ENCODE measurements at regions of chr12 and their contacts with region 1.

Region 1: DNA sequence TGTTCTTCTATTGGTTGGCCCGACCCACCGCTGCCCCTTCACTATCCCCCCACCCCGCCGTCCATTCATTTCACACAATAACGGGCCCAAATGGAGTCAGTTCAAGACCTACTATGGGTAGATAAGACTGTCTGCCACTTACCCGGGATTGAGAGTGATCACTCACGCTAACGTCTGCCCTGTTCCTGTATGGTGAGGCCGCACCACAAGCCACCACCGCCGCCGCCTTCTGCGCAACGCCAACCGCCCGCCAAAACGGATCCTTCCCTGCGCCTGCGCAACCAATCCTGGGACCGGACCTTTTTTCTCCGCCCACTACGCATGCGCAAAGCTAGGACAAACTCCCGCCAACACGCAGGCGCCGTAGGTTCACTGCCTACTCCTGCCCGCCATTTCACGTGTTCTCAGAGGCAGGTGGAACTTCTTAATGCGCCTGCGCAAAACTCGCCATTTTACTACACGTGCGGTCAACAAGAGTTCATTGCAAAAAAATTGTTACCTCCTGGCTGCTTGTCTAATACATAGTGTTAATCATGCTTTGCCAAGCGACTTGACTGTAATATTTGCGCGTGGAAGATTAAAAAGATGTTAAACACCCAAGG is at the start of gene CBX5:
- DNase-seq: peak; percentile 99
- H3K4me3 Mint-ChIP-seq: no peak within 1 kb of the TSS
- H3K27ac Mint-ChIP-seq: no peak within 1 kb of the TSS
- H3K4me1 Mint-ChIP-seq: peaks cover 23% of the 10 kb centered on the region
- H3K27me3 Mint-ChIP-seq: no peaks in the 10 kb centered on the region
- CTCF ChIP-seq: no peak
- total RNA-seq, gene CBX5: 109 and 112 TPM in 2 replicates

Region 2: DNA sequence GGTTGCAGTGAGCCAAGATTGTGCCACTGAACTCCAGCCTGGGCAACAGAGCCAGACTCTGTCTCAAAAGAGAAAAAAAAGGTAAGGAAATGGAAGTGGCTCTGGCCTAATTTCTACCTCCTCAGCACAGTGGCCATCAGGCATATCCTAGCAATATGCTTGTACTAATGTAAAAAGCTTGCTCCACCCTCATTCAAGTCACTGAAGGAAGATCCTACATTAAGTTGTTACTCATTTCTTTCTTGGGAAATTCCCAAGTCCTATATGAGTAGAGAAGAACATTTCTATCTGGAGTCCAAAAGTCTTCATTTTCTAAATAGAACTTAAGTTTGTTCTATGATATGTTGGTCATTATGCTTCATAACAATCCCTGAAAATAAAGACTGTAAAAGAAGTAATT is 408.6 kb before region 1 on chr12:
- CTCF ChIA-PET with region 1: no interaction called
- POLR2A ChIA-PET with region 1: no interaction called
- intact Hi-C with region 1: no loop called
- DNase-seq: no peak
- H3K4me3 Mint-ChIP-seq: no peak overlapping the region
- H3K27ac Mint-ChIP-seq: no peak overlapping the region
- H3K4me1 Mint-ChIP-seq: peaks cover 32% of the 10 kb centered on the region
- H3K27me3 Mint-ChIP-seq: no peaks in the 10 kb centered on the region
- CTCF ChIP-seq: no peak

Region 3: DNA sequence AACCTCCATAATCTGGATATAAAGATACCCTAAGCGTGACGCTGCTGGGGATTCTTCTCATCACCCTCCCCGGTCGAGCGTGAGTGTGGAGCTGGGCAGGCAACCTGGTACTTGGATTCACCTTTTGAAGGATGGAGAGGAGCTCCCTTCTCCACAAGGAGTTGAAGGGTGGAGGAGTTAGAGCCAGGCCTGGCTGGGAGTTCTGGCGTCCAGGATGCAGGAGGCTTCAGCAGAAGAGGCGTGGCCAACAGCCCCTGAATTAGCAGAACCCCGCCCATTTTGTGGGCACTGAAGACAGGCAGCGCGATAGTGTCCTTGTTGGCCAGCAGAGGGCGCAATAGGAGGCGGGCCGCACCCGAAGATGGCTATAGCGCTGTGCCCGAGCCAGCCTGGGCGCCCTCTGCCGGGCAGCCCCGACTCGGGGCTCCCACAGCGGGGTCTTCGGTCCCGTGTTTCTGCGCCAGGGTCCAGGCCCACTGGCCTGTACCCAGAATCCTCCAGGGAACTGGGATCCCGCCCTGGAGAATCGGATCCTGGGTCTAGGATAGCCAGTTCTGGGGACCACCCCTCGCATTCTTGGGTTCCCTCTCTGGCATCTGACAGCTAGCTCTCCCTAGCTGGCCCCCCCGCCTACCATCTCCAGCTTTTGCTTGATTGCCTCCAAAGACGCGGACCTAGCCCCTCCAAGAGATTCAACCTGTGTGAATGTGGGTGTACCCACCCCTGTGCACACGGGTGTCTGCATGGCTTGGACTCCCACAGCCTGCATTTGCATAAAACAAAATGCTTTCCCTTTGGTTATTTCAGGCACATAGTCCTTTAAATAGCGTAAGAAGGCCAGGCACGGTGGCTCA is 65.2 kb before region 1 on chr12:
- CTCF ChIA-PET with region 1: interaction called, 4 read pairs
- POLR2A ChIA-PET with region 1: interaction called, 12 read pairs
- intact Hi-C with region 1: no loop called
- DNase-seq: peak; percentile 93
- H3K4me3 Mint-ChIP-seq: peak overlapping the region; percentile 26
- H3K27ac Mint-ChIP-seq: no peak overlapping the region
- H3K4me1 Mint-ChIP-seq: peaks cover 12% of the 10 kb centered on the region
- H3K27me3 Mint-ChIP-seq: no peaks in the 10 kb centered on the region
- CTCF ChIP-seq: peak; percentile 99

Region 4: DNA sequence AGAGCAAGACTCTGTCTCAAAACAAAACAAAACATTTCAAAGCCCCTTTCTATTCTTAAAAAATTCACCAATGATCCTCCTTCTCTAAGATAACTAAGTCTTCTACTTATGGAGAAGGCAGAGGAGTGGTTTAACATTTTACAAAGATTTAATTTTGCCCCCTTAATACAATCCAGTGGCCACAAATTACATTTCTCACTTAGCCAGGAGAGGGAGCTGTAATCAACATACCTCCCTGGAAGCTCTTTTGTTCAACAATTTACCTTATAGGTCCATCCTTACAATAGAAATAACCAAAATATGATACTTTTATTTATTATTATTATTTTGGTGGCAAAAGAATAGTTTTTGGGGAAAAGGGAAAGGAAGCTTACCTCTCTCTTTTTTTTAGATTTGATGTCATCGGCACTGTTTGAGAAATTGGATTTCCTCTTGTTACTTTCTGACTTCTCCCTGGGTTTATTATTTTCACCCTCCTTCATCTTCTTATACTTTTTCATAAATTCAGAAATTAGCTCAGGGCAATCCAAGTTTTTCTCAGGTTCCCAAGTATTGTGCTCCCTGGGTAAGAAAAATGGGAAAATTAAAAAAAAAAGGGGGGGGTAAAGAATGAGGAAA is 28.2 kb before region 1 on chr12:
- CTCF ChIA-PET with region 1: interaction called, 5 read pairs
- POLR2A ChIA-PET with region 1: interaction called, 13 read pairs
- intact Hi-C with region 1: loop called (anchors 1 kb)
- DNase-seq: peak; percentile 58
- H3K4me3 Mint-ChIP-seq: no peak overlapping the region
- H3K27ac Mint-ChIP-seq: peak overlapping the region; percentile 69
- H3K4me1 Mint-ChIP-seq: no peaks in the 10 kb centered on the region
- H3K27me3 Mint-ChIP-seq: no peaks in the 10 kb centered on the region
- CTCF ChIP-seq: peak; percentile 68

Region 5: DNA sequence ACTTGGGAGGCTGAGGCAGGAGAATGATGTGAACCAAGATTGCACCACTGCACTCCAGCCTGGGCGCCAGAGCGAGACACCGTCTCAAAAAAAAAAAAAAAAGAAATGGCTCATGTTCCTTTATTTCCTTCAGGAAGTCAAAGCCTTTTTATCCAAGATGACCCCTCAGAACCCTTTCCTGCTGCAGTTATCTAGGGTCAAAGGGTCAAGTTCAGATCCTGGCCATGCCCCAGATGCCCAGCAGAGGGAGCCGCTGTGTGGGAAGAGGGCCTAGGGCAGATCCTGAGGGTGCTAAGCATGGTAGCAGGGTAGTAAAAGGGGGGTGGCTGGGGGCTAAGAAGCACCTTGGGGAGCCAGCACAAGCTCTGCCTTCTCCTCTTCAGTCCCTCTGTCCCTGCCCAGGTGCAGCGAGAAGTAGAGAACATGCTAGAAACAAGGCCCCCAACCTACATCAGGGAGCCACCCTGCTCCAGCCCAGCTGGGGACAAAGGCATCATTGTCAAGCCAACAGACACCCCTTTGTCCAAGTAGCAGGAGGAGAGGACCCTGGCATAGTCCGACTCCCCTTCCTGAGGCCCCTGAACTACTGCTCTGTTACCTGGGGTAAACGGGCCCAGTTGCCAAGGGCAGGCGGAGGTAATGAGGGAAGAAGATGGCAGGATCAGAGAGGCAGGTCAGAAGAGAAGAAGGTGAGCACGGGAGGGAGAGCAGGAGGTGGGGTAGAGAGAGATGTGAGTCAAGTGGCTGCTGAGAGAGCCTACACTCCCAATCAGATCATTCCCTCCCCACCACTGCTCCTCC is 14.4 kb after region 1 on chr12:
- CTCF ChIA-PET with region 1: interaction called, 3 read pairs
- POLR2A ChIA-PET with region 1: interaction called, 65 read pairs
- intact Hi-C with region 1: no loop called
- DNase-seq: peak; percentile 63
- H3K4me3 Mint-ChIP-seq: no peak overlapping the region
- H3K27ac Mint-ChIP-seq: no peak overlapping the region
- H3K4me1 Mint-ChIP-seq: peaks cover 7% of the 10 kb centered on the region
- H3K27me3 Mint-ChIP-seq: no peaks in the 10 kb centered on the region
- CTCF ChIP-seq: peak; percentile 81

Region 6: GRCh38 chr12:54324617-54325441 is 44.9 kb after region 1 on chr12 and contains the start of gene COPZ1:
- CTCF ChIA-PET with region 1: interaction called, 21 read pairs
- POLR2A ChIA-PET with region 1: interaction called, 41 read pairs
- intact Hi-C with region 1: loop called (anchors 1 kb)
- DNase-seq: peak; percentile 100
- H3K4me3 Mint-ChIP-seq: peak within 1 kb of the TSS; percentile 100
- H3K27ac Mint-ChIP-seq: peak within 1 kb of the TSS; percentile 100
- H3K4me1 Mint-ChIP-seq: peaks cover 19% of the 10 kb centered on the region
- H3K27me3 Mint-ChIP-seq: no peaks in the 10 kb centered on the region
- CTCF ChIP-seq: peak; percentile 77
- total RNA-seq, gene COPZ1: 207 and 299 TPM in 2 replicates